Adrenal gland (tissue), 19 donors: ENCODE measurements at regions of chrX and their contacts with region 1.

Region 1: GRCh38 chrX:46573331-46573891 is at the start of gene CHST7:
- DNase-seq: peak; percentile 35 to 77 (median 52)
- H3K4me3 ChIP-seq: peak within 1 kb of the TSS in 2 of 4 donors; percentile 21 to 47
- H3K27ac ChIP-seq: peak within 1 kb of the TSS in 3 of 5 donors; percentile 27 to 59 (median 57)
- H3K4me1 ChIP-seq: peaks cover 0 to 4% of the 10 kb centered on the region in 2 donors
- H3K27me3 ChIP-seq: no peaks in the 10 kb centered on the region
- CTCF ChIP-seq: peak in 3 of 6 experiments; percentile 9 to 29 (median 16)
- POLR2A ChIP-seq: peak in 1 of 2 donors; percentile 39
- total RNA-seq, gene CHST7: 1.4 to 24.1 (median 6.6) TPM

Region 2: DNA sequence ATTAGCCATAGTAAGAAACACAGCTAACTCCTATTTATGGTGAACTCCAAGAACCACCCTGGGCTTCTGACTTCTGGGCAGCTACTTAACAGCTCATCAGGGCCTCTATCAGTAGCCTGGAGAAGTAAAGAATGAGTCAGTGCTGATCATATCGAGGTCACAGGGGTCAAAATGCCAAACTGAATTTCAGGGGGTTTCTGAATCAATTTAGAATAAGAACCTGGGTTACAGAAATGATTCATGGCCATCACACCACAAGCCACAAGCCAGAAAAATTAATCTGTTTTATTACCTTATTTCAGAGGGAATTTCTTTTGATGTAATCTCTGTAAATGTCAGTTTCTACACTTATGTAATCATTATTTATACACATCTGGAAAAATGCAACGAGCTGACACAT is 64.5 kb after region 1 on chrX:
- intact Hi-C with region 1: loop called in 1 of 2 experiments (anchors 10 kb)
- DNase-seq: no peak
- H3K4me3 ChIP-seq: no peak overlapping the region
- H3K27ac ChIP-seq: no peak overlapping the region
- H3K4me1 ChIP-seq: peaks cover 0 to 2% of the 10 kb centered on the region in 2 donors
- H3K27me3 ChIP-seq: peaks cover 2% of the 10 kb centered on the region
- CTCF ChIP-seq: no peak
- POLR2A ChIP-seq: no peak

Region 3: DNA sequence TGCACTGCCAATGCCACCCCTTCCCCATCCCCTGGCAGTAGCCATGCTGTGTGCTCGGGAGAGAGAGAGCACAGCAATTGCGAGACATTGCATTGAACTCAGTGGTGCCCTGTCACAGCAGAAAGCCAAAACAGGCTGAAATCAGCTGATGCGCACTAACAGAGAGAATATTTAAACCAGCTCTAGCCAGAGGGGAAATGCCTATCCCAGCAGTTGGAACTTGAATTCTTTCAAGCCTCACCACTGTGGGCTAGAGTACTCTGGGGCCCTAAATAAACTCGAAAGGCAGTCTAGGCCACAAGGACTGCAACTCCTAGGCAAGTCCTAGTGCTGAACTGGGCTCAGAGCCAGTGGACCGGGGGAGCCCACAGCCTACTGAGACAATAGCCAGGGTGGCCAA is 245.7 kb after region 1 on chrX:
- intact Hi-C with region 1: no loop called
- DNase-seq: no peak
- H3K4me3 ChIP-seq: no peak overlapping the region
- H3K27ac ChIP-seq: no peak overlapping the region
- H3K4me1 ChIP-seq: no peaks in the 10 kb centered on the region
- H3K27me3 ChIP-seq: peaks cover 2% of the 10 kb centered on the region
- CTCF ChIP-seq: no peak
- POLR2A ChIP-seq: no peak